ENCODE measurements at regions of chr12 and their contacts with region 1.

Region 1: GRCh38 chr12:84912198-84913128 is at the start of gene SLC6A15:
- DNase-seq: peak; percentile 88
- H3K4me3 Mint-ChIP-seq: peak within 1 kb of the TSS; percentile 92
- H3K27ac Mint-ChIP-seq: peak within 1 kb of the TSS; percentile 92
- H3K4me1 Mint-ChIP-seq: peaks cover 17% of the 10 kb centered on the region
- H3K27me3 Mint-ChIP-seq: no peaks in the 10 kb centered on the region
- CTCF ChIP-seq: peak; percentile 73
- total RNA-seq, gene SLC6A15: 94.0 and 96.3 TPM in 2 replicates

Region 2: GRCh38 chr12:84891106-84891838 is 21.2 kb before region 1 on chr12:
- CTCF ChIA-PET with region 1: interaction called, 4 read pairs
- POLR2A ChIA-PET with region 1: interaction called, 37 read pairs
- intact Hi-C with region 1: no loop called
- DNase-seq: no peak
- H3K4me3 Mint-ChIP-seq: no peak overlapping the region
- H3K27ac Mint-ChIP-seq: no peak overlapping the region
- H3K4me1 Mint-ChIP-seq: no peaks in the 10 kb centered on the region
- H3K27me3 Mint-ChIP-seq: no peaks in the 10 kb centered on the region
- CTCF ChIP-seq: no peak

Region 3: GRCh38 chr12:84969226-84969625 is 56.8 kb after region 1 on chr12:
- CTCF ChIA-PET with region 1: no interaction called
- POLR2A ChIA-PET with region 1: interaction called, 18 read pairs
- intact Hi-C with region 1: no loop called
- DNase-seq: no peak
- H3K4me3 Mint-ChIP-seq: no peak overlapping the region
- H3K27ac Mint-ChIP-seq: no peak overlapping the region
- H3K4me1 Mint-ChIP-seq: no peaks in the 10 kb centered on the region
- H3K27me3 Mint-ChIP-seq: no peaks in the 10 kb centered on the region
- CTCF ChIP-seq: no peak

Region 4: GRCh38 chr12:85029456-85029855 is 117.0 kb after region 1 on chr12:
- CTCF ChIA-PET with region 1: interaction called, 9 read pairs
- POLR2A ChIA-PET with region 1: interaction called, 33 read pairs
- intact Hi-C with region 1: loop called (anchors 1 kb)
- DNase-seq: peak; percentile 44
- H3K4me3 Mint-ChIP-seq: no peak overlapping the region
- H3K27ac Mint-ChIP-seq: no peak overlapping the region
- H3K4me1 Mint-ChIP-seq: no peaks in the 10 kb centered on the region
- H3K27me3 Mint-ChIP-seq: no peaks in the 10 kb centered on the region
- CTCF ChIP-seq: peak; percentile 43

Measured in MCF 10A (cell line).